ENCODE measurements at regions of chr5 and their contacts with region 1.

Region 1: GRCh38 chr5:168020542-168021294 is 270.7 kb upstream of the WWC1 start:
- DNase-seq: peak in 1 of 5 donors; percentile 38
- ATAC-seq: peak in 2 of 4 donors; percentile 27 to 54
- H3K4me3 ChIP-seq: no peak overlapping the region
- H3K27ac ChIP-seq: peak overlapping the region in 9 of 12 donors; percentile 25 to 75 (median 61)
- H3K4me1 ChIP-seq: peaks cover 0 to 63% (median 15%) of the 10 kb centered on the region in 12 donors
- H3K27me3 ChIP-seq: no peaks in the 10 kb centered on the region
- CTCF ChIP-seq: peak in 9 of 12 donors; percentile 8 to 47 (median 29)
- POLR2A ChIP-seq: no peak

Region 2: GRCh38 chr5:167861129-167861927 is 159.4 kb before region 1 on chr5:
- intact Hi-C with region 1: loop called in 1 of 10 experiments (anchors 10 kb)
- DNase-seq: peak in 3 of 5 donors; percentile 11 to 30 (median 18)
- ATAC-seq: peak; percentile 55 to 88 (median 58)
- H3K4me3 ChIP-seq: no peak overlapping the region
- H3K27ac ChIP-seq: no peak overlapping the region
- H3K4me1 ChIP-seq: peaks cover 0 to 8% (median 0%) of the 10 kb centered on the region in 12 donors
- H3K27me3 ChIP-seq: no peaks in the 10 kb centered on the region
- CTCF ChIP-seq: no peak
- POLR2A ChIP-seq: no peak

Region 3: GRCh38 chr5:167934551-167934971 is 86.2 kb before region 1 on chr5:
- intact Hi-C with region 1: loop called in 2 of 10 experiments (anchors 5 to 10 kb)
- DNase-seq: peak; percentile 80 to 93 (median 83)
- ATAC-seq: peak; percentile 93 to 95 (median 94)
- H3K4me3 ChIP-seq: peak overlapping the region; percentile 32 to 68 (median 54)
- H3K27ac ChIP-seq: peak overlapping the region; percentile 62 to 95 (median 84)
- H3K4me1 ChIP-seq: peaks cover 0 to 9% (median 0%) of the 10 kb centered on the region in 12 donors
- H3K27me3 ChIP-seq: no peaks in the 10 kb centered on the region
- CTCF ChIP-seq: no peak
- POLR2A ChIP-seq: peak in 1 of 2 donors; percentile 65

Region 4: DNA sequence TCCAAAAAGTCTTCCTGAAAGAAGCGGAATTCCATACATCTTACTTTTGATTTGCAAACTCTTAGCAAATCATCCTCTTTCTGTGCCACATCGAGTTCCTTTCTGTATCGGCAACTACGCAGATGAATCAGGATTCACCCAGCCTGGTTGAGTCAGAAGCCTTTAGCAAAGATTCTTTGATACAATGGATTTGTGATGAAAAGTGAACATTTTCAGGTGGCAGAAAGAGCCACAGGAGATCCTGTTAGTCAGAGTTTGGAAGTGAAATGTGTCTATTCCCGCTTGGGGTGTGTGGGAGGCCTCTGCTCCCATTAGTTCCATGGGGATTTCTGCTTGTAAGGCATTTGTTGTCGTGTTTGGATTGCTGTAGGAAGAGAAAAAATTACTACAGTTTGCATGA is 81.0 kb before region 1 on chr5:
- intact Hi-C with region 1: loop called in 3 of 10 experiments (anchors 5 to 10 kb)
- DNase-seq: no peak
- ATAC-seq: no peak
- H3K4me3 ChIP-seq: no peak overlapping the region
- H3K27ac ChIP-seq: peak overlapping the region in 8 of 12 donors; percentile 0 to 91 (median 86)
- H3K4me1 ChIP-seq: peaks cover 0 to 31% (median 7%) of the 10 kb centered on the region in 12 donors
- H3K27me3 ChIP-seq: no peaks in the 10 kb centered on the region
- CTCF ChIP-seq: no peak
- POLR2A ChIP-seq: no peak

Region 5: DNA sequence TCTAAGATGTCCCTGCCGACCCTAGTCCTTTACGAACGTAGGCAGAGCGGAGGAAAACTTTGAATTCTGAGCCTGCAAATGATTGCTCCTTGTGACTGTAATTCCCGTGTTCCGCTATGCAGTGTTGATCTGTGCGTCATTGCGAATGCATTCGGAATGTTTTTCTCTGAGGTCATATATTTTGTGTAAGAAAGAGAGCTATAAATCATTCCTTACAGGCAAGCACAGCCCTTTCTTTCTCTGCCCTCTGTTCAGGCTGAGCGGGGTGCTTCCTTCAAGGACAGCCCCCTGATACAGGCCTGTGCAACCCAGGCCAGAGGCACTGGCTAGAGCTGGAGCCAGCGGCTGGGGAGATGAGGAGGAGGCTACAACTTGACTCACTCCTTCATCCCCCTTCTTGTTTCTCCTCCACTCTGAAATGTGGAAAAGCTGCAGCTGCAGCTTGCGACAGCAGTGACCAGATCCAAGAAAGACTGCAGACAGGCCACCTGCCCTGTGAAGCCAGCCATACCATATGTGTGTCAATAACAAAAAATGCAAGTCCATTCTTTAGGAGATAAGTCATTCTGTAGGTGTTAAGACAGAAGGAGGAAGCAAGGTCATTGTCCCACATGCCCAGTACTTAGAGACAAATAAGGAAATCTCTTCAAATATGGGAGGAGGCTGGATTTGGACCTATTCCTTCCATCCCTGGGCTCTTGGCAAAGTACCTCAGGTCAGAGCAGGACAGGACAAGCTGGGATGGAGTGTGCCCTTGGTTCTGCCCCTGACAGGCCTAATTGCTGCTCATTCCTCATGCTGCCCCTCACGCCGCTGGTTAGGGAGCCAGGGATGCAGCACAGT is 75.0 kb before region 1 on chr5:
- intact Hi-C with region 1: loop called in 3 of 10 experiments (anchors 2 to 5 kb)
- DNase-seq: peak; percentile 56 to 80 (median 65)
- ATAC-seq: peak; percentile 80 to 85 (median 82)
- H3K4me3 ChIP-seq: no peak overlapping the region
- H3K27ac ChIP-seq: peak overlapping the region; percentile 67 to 94 (median 86)
- H3K4me1 ChIP-seq: peaks cover 0 to 82% (median 36%) of the 10 kb centered on the region in 12 donors
- H3K27me3 ChIP-seq: no peaks in the 10 kb centered on the region
- CTCF ChIP-seq: no peak
- POLR2A ChIP-seq: no peak

Region 6: GRCh38 chr5:168209244-168209995 is 188.7 kb after region 1 on chr5:
- intact Hi-C with region 1: loop called in 1 of 10 experiments (anchors 5 kb)
- DNase-seq: no peak
- ATAC-seq: peak in 3 of 4 donors; percentile 23 to 57 (median 36)
- H3K4me3 ChIP-seq: no peak overlapping the region
- H3K27ac ChIP-seq: peak overlapping the region in 6 of 12 donors; percentile 9 to 50 (median 40)
- H3K4me1 ChIP-seq: peaks cover 0 to 22% (median 4%) of the 10 kb centered on the region in 12 donors
- H3K27me3 ChIP-seq: no peaks in the 10 kb centered on the region
- CTCF ChIP-seq: no peak
- POLR2A ChIP-seq: no peak